RWPE1 (cell line): ENCODE measurements at regions of chr10 and their contacts with region 1.

Region 1: GRCh38 chr10:100053686-100054460 is 27.8 kb downstream of the CPN1 start:
- DNase-seq: no peak
- H3K27ac ChIP-seq: no peak overlapping the region
- CTCF ChIP-seq: no peak

Region 2: GRCh38 chr10:99681553-99681952 is 372.3 kb before region 1 on chr10:
- CTCF ChIA-PET with region 1: interaction called, 10 read pairs
- POLR2A ChIA-PET with region 1: no interaction called
- DNase-seq: peak; percentile 36
- H3K27ac ChIP-seq: peak overlapping the region; percentile 77
- CTCF ChIP-seq: no peak; the same call in 1 of the 2 replicates

Region 3: DNA sequence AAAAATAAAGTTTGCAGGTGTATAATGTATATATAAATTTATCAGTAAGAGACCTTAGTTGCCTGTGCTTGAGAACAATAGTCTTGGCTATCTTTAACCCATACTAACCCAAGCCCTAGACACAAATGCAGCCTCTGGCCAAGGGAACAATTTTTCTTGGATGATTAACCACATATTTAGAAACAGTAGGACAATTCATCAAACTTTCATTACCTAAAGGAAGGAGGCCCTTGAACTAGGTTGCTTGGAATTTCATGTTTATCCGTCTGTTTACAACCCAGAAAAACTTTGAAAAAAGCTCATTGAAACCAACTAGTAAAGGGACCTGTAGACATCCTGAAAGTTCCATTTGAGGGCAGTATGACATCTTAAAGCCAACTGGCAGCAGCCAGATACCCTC is 140.8 kb after region 1 on chr10:
- CTCF ChIA-PET with region 1: no interaction called
- POLR2A ChIA-PET with region 1: no interaction called
- DNase-seq: no peak
- H3K27ac ChIP-seq: no peak overlapping the region
- CTCF ChIP-seq: no peak